Mammary epithelial cell (primary cell): ENCODE measurements at regions of chr7 and their contacts with region 1.

Region 1: GRCh38 chr7:132029369-132030085 is 473.1 kb upstream of the PODXL start:
- DNase-seq: peak; percentile 43
- H3K4me3 ChIP-seq: no peak overlapping the region
- H3K27ac ChIP-seq: peak overlapping the region; percentile 49
- H3K4me1 ChIP-seq: peaks cover 31% of the 10 kb centered on the region
- H3K27me3 ChIP-seq: peaks cover 2% of the 10 kb centered on the region
- CTCF ChIP-seq: no peak

Region 2: DNA sequence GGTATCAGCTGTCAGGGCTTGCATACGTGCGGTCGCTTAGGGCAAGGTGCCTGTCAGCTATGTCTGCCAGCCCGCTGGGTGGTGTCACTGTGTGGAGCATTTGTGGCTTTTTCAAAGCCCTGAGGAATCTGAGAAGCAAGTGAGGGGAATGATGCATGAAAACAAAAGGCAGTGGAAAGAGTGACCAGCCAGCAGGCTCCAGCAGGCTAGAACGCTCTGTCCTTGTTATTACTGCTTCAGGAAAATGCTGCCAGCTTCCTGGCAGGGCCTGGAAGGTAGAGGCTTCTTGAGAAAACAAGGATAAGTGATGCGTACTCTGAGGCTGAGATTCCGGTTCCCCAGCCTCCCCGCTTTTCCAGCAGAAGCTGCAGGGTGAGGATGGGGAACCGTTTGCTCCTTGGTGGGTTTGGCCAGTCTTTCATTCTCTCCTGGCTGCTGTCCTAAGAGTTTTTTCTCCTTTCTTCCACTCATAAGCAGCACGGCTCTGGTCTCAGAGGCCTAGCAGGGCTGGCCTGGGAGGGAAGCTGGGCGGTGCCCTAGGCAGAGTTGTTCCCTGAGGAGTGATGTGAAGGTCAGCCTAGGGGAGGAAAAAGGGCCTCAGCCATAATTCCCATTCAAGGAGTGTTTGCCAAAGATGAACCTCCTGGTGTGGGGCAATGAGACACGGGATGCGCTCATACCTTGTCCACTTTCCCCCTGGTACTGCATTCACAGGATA is 744.7 kb before region 1 on chr7:
- CTCF ChIA-PET with region 1: no interaction called
- dilution Hi-C with region 1: no loop called
- in situ Hi-C with region 1: no loop called
- intact Hi-C with region 1: loop called (anchors 10 kb)
- DNase-seq: peak; percentile 66
- H3K4me3 ChIP-seq: no peak overlapping the region
- H3K27ac ChIP-seq: no peak overlapping the region
- H3K4me1 ChIP-seq: peaks cover 5% of the 10 kb centered on the region
- H3K27me3 ChIP-seq: no peaks in the 10 kb centered on the region
- CTCF ChIP-seq: no peak